ENCODE measurements at regions of chr1 and their contacts with region 1.

Region 1: GRCh38 chr1:228139944-228140656 is at the start of gene GUK1:
- DNase-seq: peak; percentile 100
- H3K4me3 ChIP-seq: peak within 1 kb of the TSS; percentile 92
- H3K27ac ChIP-seq: peak within 1 kb of the TSS; percentile 79
- H3K4me1 ChIP-seq: peaks cover 77% of the 10 kb centered on the region
- CTCF ChIP-seq: 0 out of 2 replicates have a peak, but pooled peaks have one; percentile 20
- total RNA-seq, gene GUK1: 197 and 201 TPM in 2 replicates

Region 2: DNA sequence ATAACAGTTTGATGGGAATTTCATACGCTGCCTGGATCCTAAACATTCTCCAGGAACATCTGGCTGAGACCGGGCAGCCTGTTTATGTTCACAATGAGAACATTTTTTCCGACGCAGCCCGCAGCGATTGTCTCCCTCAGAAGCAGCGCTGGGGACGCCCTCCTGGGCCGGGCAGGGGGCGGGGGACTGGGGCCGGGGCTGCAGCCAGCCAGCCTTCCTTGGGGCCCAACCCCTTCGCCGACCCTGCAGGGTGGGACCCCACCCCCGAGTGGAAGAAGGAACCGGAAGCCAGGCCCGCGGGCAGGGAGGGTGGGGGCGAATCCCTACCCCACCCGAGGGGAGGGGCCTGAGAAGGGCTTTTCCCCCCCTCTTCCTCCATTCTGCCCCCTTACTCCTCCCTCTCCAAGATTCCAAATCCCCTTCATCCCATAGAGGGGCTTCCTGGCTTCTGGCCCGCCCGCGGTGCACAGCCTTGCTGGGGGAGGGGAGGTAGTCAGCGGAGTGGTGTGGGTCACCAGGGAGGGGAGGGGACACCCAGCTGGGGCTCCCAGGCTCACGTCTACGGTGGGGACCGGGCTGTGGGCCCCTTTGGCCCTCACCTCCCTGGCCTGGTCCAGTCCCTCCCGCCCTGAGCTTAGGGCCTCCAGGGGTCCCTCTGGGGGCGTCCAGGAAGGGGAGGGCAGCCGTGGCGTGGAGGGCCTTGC is 253.0 kb before region 1 on chr1:
- CTCF ChIA-PET with region 1: no interaction called
- POLR2A ChIA-PET with region 1: no interaction called
- intact Hi-C with region 1: no loop called
- DNase-seq: no peak
- H3K4me3 ChIP-seq: no peak overlapping the region
- H3K27ac ChIP-seq: no peak overlapping the region
- H3K4me1 ChIP-seq: no peaks in the 10 kb centered on the region
- CTCF ChIP-seq: no peak

Region 3: DNA sequence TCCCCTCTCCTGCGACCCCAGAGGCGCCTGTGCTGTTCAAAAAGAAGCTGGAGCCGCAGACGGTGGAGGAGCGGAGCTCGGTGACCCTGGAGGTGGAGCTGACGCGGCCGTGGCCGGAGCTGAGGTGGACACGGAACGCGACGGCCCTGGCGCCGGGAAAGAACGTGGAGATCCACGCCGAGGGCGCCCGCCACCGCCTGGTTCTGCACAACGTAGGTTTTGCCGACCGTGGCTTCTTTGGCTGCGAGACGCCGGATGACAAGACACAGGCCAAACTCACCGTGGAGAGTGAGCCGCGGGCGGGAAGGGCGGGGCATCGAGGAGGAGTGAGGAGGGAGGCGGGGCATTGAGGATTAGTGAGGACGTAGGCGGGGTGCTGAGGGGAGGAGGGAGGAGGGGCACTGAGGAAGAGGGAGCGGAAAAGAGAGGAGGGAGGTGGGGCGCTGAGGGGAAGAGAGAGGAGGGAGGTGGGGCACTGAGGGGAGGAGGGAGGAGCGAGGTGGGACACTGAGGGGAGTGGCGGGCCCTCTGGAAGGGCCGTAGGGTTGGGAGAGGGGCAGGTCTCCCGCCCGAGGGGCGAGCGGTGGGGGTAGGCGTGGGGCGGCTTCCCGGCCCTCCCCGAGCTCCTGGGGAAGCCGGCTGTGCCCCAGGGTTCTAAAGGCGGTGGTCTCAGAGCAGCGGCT is 135.8 kb after region 1 on chr1:
- CTCF ChIA-PET with region 1: no interaction called
- POLR2A ChIA-PET with region 1: no interaction called
- intact Hi-C with region 1: loop called (anchors 10 kb)
- DNase-seq: peak; percentile 81
- H3K4me3 ChIP-seq: peak overlapping the region; percentile 52
- H3K27ac ChIP-seq: no peak overlapping the region
- H3K4me1 ChIP-seq: peaks cover 13% of the 10 kb centered on the region
- CTCF ChIP-seq: no peak

Region 4: DNA sequence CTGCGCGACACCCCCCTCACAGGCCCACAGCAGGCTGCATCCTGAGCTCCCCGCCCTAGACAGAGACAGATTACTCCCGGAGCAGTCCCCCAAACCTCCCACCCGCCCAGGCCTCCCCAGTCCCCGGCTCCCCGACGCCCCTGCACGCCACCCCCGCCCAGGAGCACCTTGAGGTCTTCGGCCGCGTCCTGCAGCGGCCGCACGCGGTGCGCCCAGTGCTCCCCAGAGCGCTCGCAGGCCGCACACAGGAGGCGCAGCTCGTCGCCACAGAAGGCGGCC is 265.8 kb after region 1 on chr1:
- CTCF ChIA-PET with region 1: no interaction called
- POLR2A ChIA-PET with region 1: interaction called, 7 read pairs
- intact Hi-C with region 1: loop called (anchors 10 kb)
- DNase-seq: peak; percentile 58
- H3K4me3 ChIP-seq: peak overlapping the region; percentile 100
- H3K27ac ChIP-seq: peak overlapping the region; percentile 60
- H3K4me1 ChIP-seq: peaks cover 22% of the 10 kb centered on the region
- CTCF ChIP-seq: no peak